CD4-positive, alpha-beta memory T cell (primary cell): ENCODE measurements at regions of chr21 and their contacts with region 1.

Region 1: DNA sequence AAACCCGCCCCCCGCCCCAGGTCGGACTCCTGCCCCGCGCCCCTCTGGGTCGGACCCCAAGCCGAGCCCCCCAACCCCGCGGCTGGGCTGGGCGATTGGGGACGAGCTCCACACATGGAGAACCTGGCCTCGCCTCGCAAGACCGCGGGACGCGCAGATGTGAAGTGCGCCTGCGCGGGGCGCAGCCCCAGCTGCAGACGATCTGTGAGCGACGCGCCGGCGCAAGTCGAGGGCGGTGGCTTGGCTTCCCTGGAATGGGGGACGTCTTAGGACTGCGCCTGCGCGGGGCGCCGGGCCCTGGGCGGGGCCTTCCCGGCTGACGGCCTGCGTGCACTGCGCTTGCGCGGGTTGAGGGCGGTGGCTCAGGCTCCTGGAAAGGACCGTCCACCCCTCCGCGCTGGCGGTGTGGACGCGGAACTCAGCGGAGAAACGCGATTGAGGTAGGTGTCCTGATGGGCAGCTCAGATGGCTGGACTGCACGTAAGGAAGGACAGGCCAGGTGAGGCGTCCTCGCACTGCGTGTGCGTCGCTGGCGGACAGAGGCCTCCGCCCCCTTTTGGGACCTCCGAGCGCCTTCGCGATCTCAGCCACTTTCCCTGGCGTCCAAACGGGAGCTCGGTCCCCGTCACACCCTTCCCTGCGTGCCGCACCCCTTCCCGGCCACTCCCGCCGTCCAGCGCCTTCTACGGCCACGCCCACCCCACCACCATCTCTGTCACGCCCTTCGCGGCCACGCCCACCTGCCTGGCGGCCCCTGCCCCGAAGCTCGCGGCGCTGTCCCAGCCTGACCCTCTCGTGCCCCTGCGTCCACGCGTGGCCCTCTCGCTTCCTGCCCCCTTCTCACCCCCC is at the start of gene PRMT2:
- DNase-seq: peak; percentile 96 to 99 (median 99)
- H3K4me3 ChIP-seq: peak within 1 kb of the TSS; percentile 82 to 100
- H3K4me3 Mint-ChIP-seq: peak within 1 kb of the TSS; percentile 93 to 98 (median 96)
- H3K27ac ChIP-seq: peak within 1 kb of the TSS; percentile 93
- H3K27ac Mint-ChIP-seq: peak within 1 kb of the TSS; percentile 89 to 99 (median 96)
- H3K4me1 ChIP-seq: peaks cover 72% of the 10 kb centered on the region
- H3K4me1 Mint-ChIP-seq: peaks cover 41 to 80% (median 63%) of the 10 kb centered on the region in 4 donors
- H3K27me3 ChIP-seq: no peaks in the 10 kb centered on the region
- H3K27me3 Mint-ChIP-seq: no peaks in the 10 kb centered on the region
- total RNA-seq, gene PRMT2: 175 to 177 TPM

Region 2: GRCh38 chr21:46458315-46459023 is 177.1 kb before region 1 on chr21 and contains the start of gene DIP2A:
- CTCF ChIA-PET with region 1: no interaction called
- POLR2A ChIA-PET with region 1: interaction called, 75 read pairs
- intact Hi-C with region 1: loop called (anchors 1 kb)
- DNase-seq: peak; percentile 95 to 97 (median 96)
- H3K4me3 ChIP-seq: peak within 1 kb of the TSS; percentile 89 to 100
- H3K4me3 Mint-ChIP-seq: peak within 1 kb of the TSS; percentile 88 to 93 (median 92)
- H3K27ac ChIP-seq: peak within 1 kb of the TSS; percentile 74
- H3K27ac Mint-ChIP-seq: peak within 1 kb of the TSS; percentile 90 to 95 (median 94)
- H3K4me1 ChIP-seq: peaks cover 42% of the 10 kb centered on the region
- H3K4me1 Mint-ChIP-seq: peaks cover 28 to 60% (median 44%) of the 10 kb centered on the region in 4 donors
- H3K27me3 ChIP-seq: no peaks in the 10 kb centered on the region
- H3K27me3 Mint-ChIP-seq: no peaks in the 10 kb centered on the region
- total RNA-seq, gene DIP2A: 94.6 to 95.9 TPM

Region 3: GRCh38 chr21:46532080-46532479 is 103.5 kb before region 1 on chr21:
- CTCF ChIA-PET with region 1: interaction called, 9 read pairs
- POLR2A ChIA-PET with region 1: interaction called, 10 read pairs
- intact Hi-C with region 1: no loop called
- DNase-seq: peak in 4 of 5 donors; percentile 12 to 42 (median 28)
- H3K4me3 ChIP-seq: no peak overlapping the region
- H3K4me3 Mint-ChIP-seq: peak overlapping the region in 1 of 8 donors; percentile 64
- H3K27ac ChIP-seq: no peak overlapping the region
- H3K27ac Mint-ChIP-seq: peak overlapping the region in 6 of 7 donors; percentile 25 to 91 (median 87)
- H3K4me1 ChIP-seq: no peaks in the 10 kb centered on the region
- H3K4me1 Mint-ChIP-seq: peaks cover 15 to 52% (median 22%) of the 10 kb centered on the region in 4 donors
- H3K27me3 ChIP-seq: no peaks in the 10 kb centered on the region
- H3K27me3 Mint-ChIP-seq: no peaks in the 10 kb centered on the region

Region 4: GRCh38 chr21:46559291-46559983 is 76.1 kb before region 1 on chr21:
- CTCF ChIA-PET with region 1: interaction called, 19 read pairs
- POLR2A ChIA-PET with region 1: interaction called, 108 read pairs
- intact Hi-C with region 1: loop called (anchors 2 kb)
- DNase-seq: peak; percentile 61 to 83 (median 66)
- H3K4me3 ChIP-seq: peak overlapping the region; percentile 45 to 46
- H3K4me3 Mint-ChIP-seq: peak overlapping the region; percentile 67 to 90 (median 78)
- H3K27ac ChIP-seq: peak overlapping the region; percentile 66
- H3K27ac Mint-ChIP-seq: peak overlapping the region; percentile 87 to 99 (median 97)
- H3K4me1 ChIP-seq: peaks cover 50% of the 10 kb centered on the region
- H3K4me1 Mint-ChIP-seq: peaks cover 29 to 82% (median 41%) of the 10 kb centered on the region in 4 donors
- H3K27me3 ChIP-seq: no peaks in the 10 kb centered on the region
- H3K27me3 Mint-ChIP-seq: no peaks in the 10 kb centered on the region

Region 5: DNA sequence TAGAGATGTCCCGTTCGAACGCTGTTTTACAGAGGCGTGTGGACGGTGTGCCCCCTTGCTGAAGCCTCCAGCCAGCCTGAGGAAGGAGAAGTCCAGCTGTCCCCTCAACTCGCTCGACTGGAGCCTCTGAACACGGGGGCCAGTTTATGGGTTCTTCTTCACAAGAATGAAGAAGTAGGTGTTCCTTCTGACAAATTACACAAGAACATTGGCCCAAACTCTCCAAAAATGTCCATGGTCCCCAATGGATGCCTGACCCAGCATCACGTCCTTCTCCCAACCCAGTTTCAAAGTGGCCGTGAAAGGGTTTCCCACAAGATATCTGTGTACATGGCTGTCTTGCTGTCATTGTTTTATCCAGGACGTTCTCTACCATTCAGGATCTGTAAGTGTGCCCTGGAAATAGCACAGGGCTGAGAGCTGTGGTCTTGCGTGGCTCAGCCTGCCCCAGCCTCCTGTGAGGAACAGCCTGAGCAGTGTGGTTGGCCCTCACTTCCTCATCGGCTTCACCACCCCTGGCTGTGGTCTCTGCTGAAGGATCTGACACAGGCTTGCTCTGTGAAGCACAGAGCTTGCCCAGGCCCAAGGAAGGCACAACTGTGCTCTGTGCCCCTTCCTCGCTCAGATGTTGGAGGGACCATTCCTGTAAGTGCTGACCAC is 29.7 kb before region 1 on chr21:
- CTCF ChIA-PET with region 1: no interaction called
- POLR2A ChIA-PET with region 1: interaction called, 26 read pairs
- intact Hi-C with region 1: no loop called
- DNase-seq: peak; percentile 39 to 52 (median 42)
- H3K4me3 ChIP-seq: no peak overlapping the region
- H3K4me3 Mint-ChIP-seq: peak overlapping the region in 7 of 8 donors; percentile 51 to 85 (median 73)
- H3K27ac ChIP-seq: peak overlapping the region; percentile 1
- H3K27ac Mint-ChIP-seq: peak overlapping the region in 6 of 7 donors; percentile 11 to 92 (median 83)
- H3K4me1 ChIP-seq: peaks cover 24% of the 10 kb centered on the region
- H3K4me1 Mint-ChIP-seq: peaks cover 25 to 65% (median 33%) of the 10 kb centered on the region in 4 donors
- H3K27me3 ChIP-seq: no peaks in the 10 kb centered on the region
- H3K27me3 Mint-ChIP-seq: no peaks in the 10 kb centered on the region